CD8-positive, alpha-beta T cell (primary cell): ENCODE measurements at regions of chr2 and their contacts with region 1.

Region 1: DNA sequence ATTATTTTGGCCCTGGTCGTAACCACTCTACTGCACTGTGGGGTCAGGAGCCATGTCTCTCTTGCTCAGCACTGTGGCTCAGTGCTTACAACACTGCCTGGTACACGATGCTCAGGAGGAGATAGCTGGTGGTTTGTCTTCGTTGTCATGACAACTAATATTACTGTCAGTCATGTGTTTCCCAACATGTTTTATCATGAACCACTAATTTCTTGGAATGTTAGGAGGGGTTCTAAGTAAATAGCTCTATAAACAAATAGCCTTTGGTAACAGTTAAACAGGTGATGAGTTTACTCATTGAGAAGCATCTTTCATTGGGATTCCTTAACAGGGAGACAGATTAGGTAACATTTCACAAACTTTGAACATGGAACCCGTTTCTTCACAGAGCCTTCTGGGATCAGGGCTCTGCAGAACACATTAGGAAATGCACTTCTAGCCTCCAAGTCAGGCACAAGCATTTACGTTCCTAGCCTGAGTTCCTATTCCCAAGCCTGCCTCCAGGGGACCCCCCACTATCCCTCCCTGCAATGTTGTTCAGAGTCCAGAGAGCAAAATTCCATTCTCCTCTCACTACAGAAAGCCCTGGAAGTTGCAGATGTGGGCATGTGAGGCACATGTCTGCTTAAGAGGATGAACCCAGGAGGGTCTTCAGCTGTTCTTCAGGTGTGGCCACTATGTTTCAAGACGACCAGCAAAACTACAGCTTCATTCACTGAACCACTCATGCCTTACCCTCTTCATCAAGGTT is 6.4 kb upstream of the RBM44 start:
- DNase-seq: no peak
- ATAC-seq: no peak
- H3K4me3 ChIP-seq: no peak overlapping the region
- H3K4me3 Mint-ChIP-seq: no peak overlapping the region
- H3K27ac ChIP-seq: no peak overlapping the region
- H3K27ac Mint-ChIP-seq: no peak overlapping the region
- H3K4me1 ChIP-seq: no peaks in the 10 kb centered on the region
- H3K4me1 Mint-ChIP-seq: peaks cover 3% of the 10 kb centered on the region
- H3K27me3 ChIP-seq: no peaks in the 10 kb centered on the region
- H3K27me3 Mint-ChIP-seq: no peaks in the 10 kb centered on the region
- CTCF ChIP-seq: no peak

Region 2: DNA sequence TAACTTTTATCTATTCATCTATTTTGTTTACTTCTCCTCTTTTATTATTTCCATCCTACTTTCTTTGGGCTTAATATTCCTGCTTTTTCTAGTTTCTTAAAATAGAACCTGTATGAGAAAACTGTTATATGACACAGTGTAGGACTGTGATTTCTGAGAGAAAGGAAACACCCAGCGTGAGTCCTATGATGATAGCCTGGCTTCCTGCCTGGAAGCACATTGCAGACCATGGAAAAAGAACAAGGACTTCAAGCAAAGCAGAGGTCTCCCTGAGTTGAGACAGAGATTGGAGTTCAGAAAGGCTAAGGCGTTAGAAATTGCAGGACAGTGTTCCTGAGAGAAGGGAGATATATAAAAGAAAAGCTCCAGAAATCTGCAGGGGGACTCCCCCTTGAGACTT is 14.2 kb after region 1 on chr2:
- CTCF ChIA-PET with region 1: no interaction called
- POLR2A ChIA-PET with region 1: no interaction called
- intact Hi-C with region 1: loop called in 1 of 2 experiments (anchors 1 kb)
- DNase-seq: no peak
- ATAC-seq: no peak
- H3K4me3 ChIP-seq: no peak overlapping the region
- H3K4me3 Mint-ChIP-seq: no peak overlapping the region
- H3K27ac ChIP-seq: no peak overlapping the region
- H3K27ac Mint-ChIP-seq: no peak overlapping the region
- H3K4me1 ChIP-seq: no peaks in the 10 kb centered on the region
- H3K4me1 Mint-ChIP-seq: no peaks in the 10 kb centered on the region
- H3K27me3 ChIP-seq: no peaks in the 10 kb centered on the region
- H3K27me3 Mint-ChIP-seq: peaks cover 5% of the 10 kb centered on the region
- CTCF ChIP-seq: no peak